Astrocyte of the cerebellum (primary cell): ENCODE measurements at regions of chr5 and their contacts with region 1.

Region 1: DNA sequence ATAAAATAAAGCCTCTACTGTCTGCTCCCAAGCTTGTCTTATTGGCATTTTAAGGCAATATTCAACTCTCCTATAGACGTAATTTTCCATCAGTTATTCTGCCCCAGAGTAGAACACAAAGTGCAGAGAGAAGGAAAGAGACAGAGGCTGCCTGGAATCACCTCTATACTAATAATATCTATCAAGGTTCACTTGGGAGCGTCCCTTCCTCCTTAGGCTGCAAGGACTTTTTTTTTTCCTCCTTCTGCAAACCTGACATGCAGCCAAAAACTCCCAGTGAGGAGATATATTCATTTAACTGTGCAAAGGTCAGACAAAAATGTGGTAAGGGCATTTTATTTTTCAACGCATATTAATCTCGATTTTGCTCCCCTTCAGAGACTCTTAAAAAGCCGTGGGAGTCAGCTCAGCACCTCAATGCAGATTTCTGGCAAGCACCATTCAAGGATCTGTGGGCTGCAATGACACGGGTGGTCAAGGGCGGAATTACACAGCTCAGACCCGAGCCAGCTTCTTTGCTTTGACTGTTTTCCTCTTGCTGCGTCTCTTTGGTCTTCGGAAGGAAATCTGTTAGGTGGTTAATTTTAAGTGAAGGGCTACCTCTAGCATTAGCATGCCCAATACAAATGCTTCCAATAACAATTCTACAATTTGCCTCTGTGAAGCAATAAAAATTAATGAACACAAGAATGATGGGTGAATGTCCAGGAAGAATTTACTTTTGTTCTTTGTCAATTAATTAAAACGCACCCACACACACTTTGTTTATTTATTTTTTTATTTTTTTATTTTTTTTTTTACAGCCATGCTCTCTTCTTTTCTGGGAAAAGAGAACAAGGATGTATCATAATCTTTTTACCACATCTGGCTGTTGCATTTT is 587.7 kb upstream of the GRAMD2B start:
- DNase-seq: peak; percentile 57
- H3K4me3 ChIP-seq: no peak overlapping the region
- CTCF ChIP-seq: peak; percentile 84

Region 2: DNA sequence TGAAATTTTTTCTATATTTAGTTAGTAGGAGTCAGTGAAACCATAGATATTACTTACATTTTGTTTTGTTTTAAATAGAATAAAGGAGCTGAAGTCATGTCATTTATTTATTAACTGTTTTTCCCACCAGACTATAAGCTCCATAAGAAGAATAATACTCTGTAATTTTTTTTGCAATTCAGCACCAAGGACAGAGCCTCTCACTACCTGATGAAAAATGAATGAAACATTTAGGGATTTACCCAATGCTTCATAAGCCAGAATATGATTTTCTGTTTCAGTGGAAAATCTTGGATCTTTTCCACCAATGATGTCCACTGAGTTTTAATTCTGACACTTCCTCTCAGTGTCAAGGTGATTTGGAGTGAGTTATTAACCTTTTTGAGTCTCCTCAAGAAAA is 37.2 kb before region 1 on chr5:
- in situ Hi-C with region 1: loop called (anchors 5 kb)
- DNase-seq: peak; percentile 42
- H3K4me3 ChIP-seq: no peak overlapping the region
- CTCF ChIP-seq: no peak

Region 3: DNA sequence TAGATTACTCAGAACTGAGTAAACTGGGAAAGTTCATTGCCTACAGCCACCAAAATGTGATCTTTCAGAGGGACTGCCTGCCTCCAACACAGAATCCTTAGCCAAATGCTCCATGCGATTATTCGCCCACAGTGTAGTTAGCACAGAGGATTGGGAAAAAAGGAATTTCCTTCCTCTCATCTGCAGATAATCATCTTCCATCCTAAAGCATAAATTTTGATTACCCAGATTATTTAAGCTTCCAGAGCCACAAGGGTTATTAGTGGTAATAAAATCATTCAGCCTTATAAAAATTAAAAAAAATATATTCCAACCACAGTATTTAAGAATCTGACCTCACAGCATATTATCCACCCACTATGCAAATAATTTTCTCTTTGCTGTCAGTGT is 302.4 kb after region 1 on chr5:
- in situ Hi-C with region 1: no loop called
- DNase-seq: no peak
- H3K4me3 ChIP-seq: no peak overlapping the region
- CTCF ChIP-seq: no peak